PC-3 (cell line): ENCODE measurements at regions of chr11 and their contacts with region 1.

Region 1: GRCh38 chr11:67167715-67168114 is 48.7 kb downstream of the KDM2A start:
- DNase-seq: peak; percentile 51
- ATAC-seq: peak; percentile 71
- H3K4me3 ChIP-seq: 0 out of 2 replicates have a peak overlapping the region, but pooled peaks have one; percentile 14
- H3K27ac ChIP-seq: peak overlapping the region; percentile 74
- H3K4me1 ChIP-seq: peaks cover 15% of the 10 kb centered on the region
- H3K27me3 ChIP-seq: no peaks in the 10 kb centered on the region
- CTCF ChIP-seq: no peak

Region 2: GRCh38 chr11:67082035-67082791 is 85.5 kb before region 1 on chr11:
- CTCF ChIA-PET with region 1: interaction called, 4 read pairs
- POLR2A ChIA-PET with region 1: interaction called, 3 read pairs
- intact Hi-C with region 1: loop called (anchors 1 kb)
- DNase-seq: no peak
- ATAC-seq: no peak
- H3K4me3 ChIP-seq: no peak overlapping the region
- H3K27ac ChIP-seq: no peak overlapping the region
- H3K4me1 ChIP-seq: peaks cover 19% of the 10 kb centered on the region
- H3K27me3 ChIP-seq: no peaks in the 10 kb centered on the region
- CTCF ChIP-seq: no peak

Region 3: GRCh38 chr11:67118801-67119584 is 48.7 kb before region 1 on chr11 and contains the start of gene KDM2A:
- CTCF ChIA-PET with region 1: interaction called, 4 read pairs
- POLR2A ChIA-PET with region 1: no interaction called
- intact Hi-C with region 1: loop called (anchors 2 kb)
- DNase-seq: peak; percentile 99
- ATAC-seq: peak; percentile 82
- H3K4me3 ChIP-seq: peak within 1 kb of the TSS; percentile 97
- H3K27ac ChIP-seq: peak within 1 kb of the TSS; percentile 34; the same call in 1 of the 2 replicates
- H3K4me1 ChIP-seq: peaks cover 6% of the 10 kb centered on the region; the same call in 1 of the 2 replicates
- H3K27me3 ChIP-seq: no peaks in the 10 kb centered on the region
- CTCF ChIP-seq: no peak
- total RNA-seq, gene KDM2A: 65.3 and 87.1 TPM in 2 replicates